ENCODE measurements at regions of chr11 and their contacts with region 1.

Region 1: DNA sequence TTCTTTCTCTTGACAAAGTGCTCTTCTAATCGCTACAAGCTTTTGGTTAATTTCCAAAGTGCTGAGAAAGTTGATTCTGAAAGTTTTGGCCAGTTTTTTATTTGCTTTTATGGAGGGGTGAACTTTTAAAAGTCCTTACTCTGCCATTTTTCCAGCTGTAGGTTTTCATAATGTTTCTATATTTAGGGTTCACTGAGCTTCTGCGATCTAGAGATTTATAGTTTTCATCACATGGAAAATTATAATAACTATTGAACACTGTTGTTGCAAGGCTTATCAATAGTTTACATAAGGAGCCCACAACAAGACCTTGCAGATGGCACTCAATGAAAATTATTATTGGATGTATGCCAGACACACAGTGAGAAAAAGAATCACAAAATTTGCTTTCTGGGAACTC is 55.1 kb downstream of the DLG2 start:
- DNase-seq: no peak
- H3K4me3 ChIP-seq: no peak overlapping the region
- H3K27ac ChIP-seq: no peak overlapping the region
- H3K4me1 ChIP-seq: no peaks in the 10 kb centered on the region
- H3K27me3 ChIP-seq: no peaks in the 10 kb centered on the region
- CTCF ChIP-seq: no peak
- EP300 ChIP-seq: no peak
- POLR2A ChIP-seq: no peak

Region 2: DNA sequence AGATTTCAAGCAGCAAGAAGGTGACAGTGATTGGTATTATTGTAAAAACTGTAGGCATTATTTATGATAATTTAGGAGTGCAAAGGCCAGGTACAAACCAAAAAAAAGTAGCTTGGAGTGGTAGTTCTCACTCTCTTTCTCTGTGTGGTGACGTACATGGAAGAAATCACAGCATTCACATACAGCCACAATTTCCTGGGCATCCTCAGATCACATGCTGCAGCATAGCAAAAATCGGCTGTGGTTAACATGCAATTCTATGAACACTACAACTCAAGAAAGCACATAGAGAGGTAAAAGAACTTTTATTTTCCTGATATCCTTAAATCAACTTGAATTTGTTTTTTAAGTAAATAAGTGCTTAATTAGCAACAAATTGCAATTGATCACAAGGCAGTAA is 820.7 kb before region 1 on chr11:
- in situ Hi-C with region 1: loop called in 1 of 4 experiments (anchors 25 kb)
- intact Hi-C with region 1: no loop called
- DNase-seq: no peak
- H3K4me3 ChIP-seq: no peak overlapping the region
- H3K27ac ChIP-seq: no peak overlapping the region
- H3K4me1 ChIP-seq: no peaks in the 10 kb centered on the region
- H3K27me3 ChIP-seq: no peaks in the 10 kb centered on the region
- CTCF ChIP-seq: no peak
- EP300 ChIP-seq: no peak
- POLR2A ChIP-seq: no peak

Region 3: DNA sequence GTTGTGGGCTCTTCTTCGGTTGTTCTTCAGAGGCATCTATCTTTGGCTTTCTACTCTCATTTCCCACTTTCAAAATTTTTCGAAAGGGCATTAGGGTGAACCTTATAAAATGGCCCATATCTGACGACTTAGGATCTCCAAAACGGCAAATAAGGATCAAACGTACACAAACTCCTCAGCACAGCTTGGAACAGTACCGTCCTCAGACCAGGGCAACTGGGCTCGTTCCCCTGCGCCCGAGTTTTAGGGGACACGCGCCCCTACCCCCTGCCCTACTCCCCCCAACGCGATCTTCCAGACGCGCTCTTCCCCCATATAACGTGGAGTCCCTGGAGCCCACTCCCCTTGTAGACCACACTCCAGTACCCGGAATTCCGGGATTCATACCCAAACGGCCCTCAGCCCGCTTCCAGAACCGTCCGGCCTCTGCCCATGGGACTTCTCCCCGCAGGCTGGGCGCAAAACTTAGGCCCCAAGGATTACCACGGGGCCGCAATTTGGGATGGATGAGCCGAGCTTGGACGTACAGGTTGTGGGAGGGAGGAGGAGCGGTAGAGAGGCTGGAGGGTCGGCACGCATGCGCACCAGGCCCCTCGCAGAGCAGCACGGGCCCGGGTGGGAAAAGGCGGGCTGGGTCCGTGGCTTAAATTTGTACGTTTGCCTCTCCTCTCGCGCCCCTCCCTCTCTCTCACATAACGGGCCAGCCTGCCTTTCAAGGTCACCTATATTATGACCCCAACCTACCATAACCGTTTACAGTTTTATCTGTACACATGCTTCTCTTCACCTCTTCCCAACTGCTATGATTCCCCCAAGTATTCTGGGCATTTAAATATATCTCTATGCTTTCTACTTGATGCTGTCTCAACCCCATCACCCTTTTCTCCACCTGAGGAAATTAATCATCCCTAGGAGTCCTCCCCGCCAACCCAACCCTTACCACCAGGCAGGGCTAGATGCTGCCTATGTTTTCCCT is 110.6 kb after region 1 on chr11:
- in situ Hi-C with region 1: no loop called
- intact Hi-C with region 1: no loop called
- DNase-seq: peak; percentile 55
- H3K4me3 ChIP-seq: peak overlapping the region; percentile 29 to 57 (median 33)
- H3K27ac ChIP-seq: peak overlapping the region; percentile 11 to 41 (median 24)
- H3K4me1 ChIP-seq: peaks cover 3 to 29% (median 6%) of the 10 kb centered on the region in 4 donors
- H3K27me3 ChIP-seq: no peaks in the 10 kb centered on the region
- CTCF ChIP-seq: no peak
- EP300 ChIP-seq: no peak
- POLR2A ChIP-seq: peak; percentile 27